Activated naive CD4-positive, alpha-beta T cell treated with anti-CD3 and anti-CD28 coated beads, Interleukin-2, amount 10 ng/mL, durations not matched to agents 7 days and 5 days (primary cell): ENCODE measurements at regions of chr12 and their contacts with region 1.

Region 1: GRCh38 chr12:131104463-131105350 is 151.0 kb downstream of the ADGRD1 start:
- DNase-seq: peak; percentile 87
- H3K4me3 Mint-ChIP-seq: no peak overlapping the region
- H3K27ac Mint-ChIP-seq: no peak overlapping the region
- H3K4me1 Mint-ChIP-seq: peaks cover 10% of the 10 kb centered on the region
- H3K27me3 Mint-ChIP-seq: peaks cover 24% of the 10 kb centered on the region

Region 2: GRCh38 chr12:131092901-131093603 is 11.7 kb before region 1 on chr12:
- CTCF ChIA-PET with region 1: interaction called, 15 read pairs
- DNase-seq: no peak
- H3K4me3 Mint-ChIP-seq: no peak overlapping the region
- H3K27ac Mint-ChIP-seq: no peak overlapping the region
- H3K4me1 Mint-ChIP-seq: no peaks in the 10 kb centered on the region
- H3K27me3 Mint-ChIP-seq: peaks cover 3% of the 10 kb centered on the region

Region 3: DNA sequence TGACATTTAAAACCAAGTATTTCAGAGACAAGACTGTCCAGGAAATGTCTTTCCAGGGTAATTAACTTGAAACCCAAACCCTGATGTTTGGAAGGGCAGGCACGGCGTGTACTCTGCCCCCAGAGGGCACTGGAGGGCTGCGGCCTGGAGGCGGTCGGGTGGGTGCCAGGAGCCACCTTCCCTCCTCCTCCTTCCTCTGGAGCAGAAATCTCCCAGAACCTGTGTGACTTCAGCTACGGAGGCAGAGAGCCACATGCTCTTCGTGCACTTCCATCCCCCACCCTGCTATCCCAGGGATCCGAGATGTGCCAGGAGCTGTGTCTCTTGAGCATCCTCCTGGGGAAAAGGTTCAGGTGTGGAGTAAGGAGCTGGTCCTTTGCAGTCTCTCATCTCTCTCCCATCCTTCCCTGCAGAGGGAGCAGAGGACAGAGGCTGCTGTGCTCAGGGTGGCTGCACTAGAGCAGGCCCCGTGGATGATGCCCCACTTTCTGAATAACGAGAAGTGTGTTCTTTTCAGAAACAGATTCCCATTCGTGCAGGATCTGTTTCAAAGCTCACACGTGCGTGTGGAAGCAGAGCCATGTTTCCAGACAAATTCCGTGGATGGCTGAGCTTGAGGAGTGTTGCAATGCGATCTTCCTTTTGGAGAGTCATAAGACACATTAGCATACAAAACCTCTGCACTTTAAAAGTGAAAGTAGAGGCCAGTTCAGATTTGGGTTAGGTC is 11.8 kb after region 1 on chr12:
- CTCF ChIA-PET with region 1: interaction called, 22 read pairs
- DNase-seq: no peak
- H3K4me3 Mint-ChIP-seq: no peak overlapping the region
- H3K27ac Mint-ChIP-seq: no peak overlapping the region
- H3K4me1 Mint-ChIP-seq: no peaks in the 10 kb centered on the region
- H3K27me3 Mint-ChIP-seq: peaks cover 17% of the 10 kb centered on the region

Region 4: GRCh38 chr12:131132118-131132892 is 27.6 kb after region 1 on chr12:
- CTCF ChIA-PET with region 1: interaction called, 63 read pairs
- DNase-seq: peak; percentile 73
- H3K4me3 Mint-ChIP-seq: no peak overlapping the region
- H3K27ac Mint-ChIP-seq: no peak overlapping the region
- H3K4me1 Mint-ChIP-seq: no peaks in the 10 kb centered on the region
- H3K27me3 Mint-ChIP-seq: peaks cover 4% of the 10 kb centered on the region

Region 5: DNA sequence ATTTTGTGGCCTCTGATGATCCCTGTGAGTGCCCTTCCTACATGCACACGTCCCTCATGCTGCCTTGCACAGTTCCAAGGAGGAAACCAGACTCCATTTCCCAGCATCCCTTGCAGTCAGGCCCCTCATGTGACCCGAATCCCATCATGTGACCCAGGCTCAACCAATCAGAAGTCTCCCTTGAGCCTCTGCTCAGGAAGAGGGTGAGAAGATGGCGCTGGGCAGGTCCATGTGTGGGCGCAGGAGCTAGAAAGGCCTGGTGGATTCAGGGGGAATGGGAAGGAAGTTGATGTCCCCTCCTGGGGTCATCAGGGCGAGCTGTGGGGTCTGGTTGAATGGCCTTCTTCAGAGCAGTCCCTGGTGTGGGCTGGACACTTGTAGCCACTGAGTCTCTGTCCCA is 89.5 kb after region 1 on chr12:
- CTCF ChIA-PET with region 1: no interaction called
- DNase-seq: no peak
- H3K4me3 Mint-ChIP-seq: no peak overlapping the region
- H3K27ac Mint-ChIP-seq: no peak overlapping the region
- H3K4me1 Mint-ChIP-seq: no peaks in the 10 kb centered on the region
- H3K27me3 Mint-ChIP-seq: peaks cover 5% of the 10 kb centered on the region

Region 6: GRCh38 chr12:131209082-131210070 is 104.7 kb after region 1 on chr12:
- CTCF ChIA-PET with region 1: interaction called, 10 read pairs
- DNase-seq: no peak
- H3K4me3 Mint-ChIP-seq: no peak overlapping the region
- H3K27ac Mint-ChIP-seq: no peak overlapping the region
- H3K4me1 Mint-ChIP-seq: peaks cover 5% of the 10 kb centered on the region
- H3K27me3 Mint-ChIP-seq: peaks cover 10% of the 10 kb centered on the region

Region 7: DNA sequence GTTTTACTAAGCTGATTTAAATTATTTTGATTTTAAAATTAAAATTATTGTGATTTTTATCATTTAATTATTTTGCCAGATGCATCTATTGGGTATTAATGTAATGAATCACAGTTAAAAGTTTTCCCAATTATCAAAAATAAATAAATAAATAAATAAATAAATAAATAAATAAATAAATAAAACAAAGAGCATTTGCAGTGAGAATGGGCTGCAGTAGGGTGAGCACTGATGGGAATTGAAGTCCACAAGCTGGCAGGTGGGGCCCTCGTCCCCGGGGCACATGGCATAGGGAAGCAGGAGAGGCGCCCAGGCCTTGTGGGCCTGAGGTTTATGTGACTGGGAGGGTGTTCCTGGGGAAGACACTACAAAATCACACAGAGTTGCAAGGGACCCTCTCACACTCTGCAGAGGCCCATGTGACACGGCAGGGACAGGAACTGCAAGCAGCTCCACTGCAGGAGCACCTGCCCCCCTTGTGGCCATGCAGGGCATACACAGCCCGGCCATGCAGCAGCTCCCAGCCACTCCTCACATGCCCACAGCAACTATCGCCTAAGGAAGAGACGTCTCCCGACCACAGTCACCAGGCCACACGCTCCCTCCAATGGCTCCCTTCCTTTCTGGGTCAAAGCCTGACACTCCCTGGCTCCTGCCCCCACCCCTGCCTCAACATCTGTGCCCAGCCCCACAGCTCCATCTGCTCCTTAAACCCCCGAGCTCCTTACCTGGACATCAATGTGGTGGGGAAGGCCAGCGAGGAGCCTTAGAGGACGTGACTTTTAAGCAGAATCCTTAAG is 349.9 kb after region 1 on chr12:
- CTCF ChIA-PET with region 1: interaction called, 19 read pairs
- DNase-seq: peak; percentile 54
- H3K4me3 Mint-ChIP-seq: no peak overlapping the region
- H3K27ac Mint-ChIP-seq: no peak overlapping the region
- H3K4me1 Mint-ChIP-seq: no peaks in the 10 kb centered on the region
- H3K27me3 Mint-ChIP-seq: peaks cover 12% of the 10 kb centered on the region

Region 8: GRCh38 chr12:131830335-131830913 is 725.7 kb after region 1 on chr12:
- CTCF ChIA-PET with region 1: interaction called, 31 read pairs
- DNase-seq: peak; percentile 60
- H3K4me3 Mint-ChIP-seq: peak overlapping the region; percentile 59
- H3K27ac Mint-ChIP-seq: no peak overlapping the region
- H3K4me1 Mint-ChIP-seq: peaks cover 17% of the 10 kb centered on the region
- H3K27me3 Mint-ChIP-seq: peaks cover 74% of the 10 kb centered on the region